ENCODE measurements at regions of chr12 and their contacts with region 1.

Region 1: DNA sequence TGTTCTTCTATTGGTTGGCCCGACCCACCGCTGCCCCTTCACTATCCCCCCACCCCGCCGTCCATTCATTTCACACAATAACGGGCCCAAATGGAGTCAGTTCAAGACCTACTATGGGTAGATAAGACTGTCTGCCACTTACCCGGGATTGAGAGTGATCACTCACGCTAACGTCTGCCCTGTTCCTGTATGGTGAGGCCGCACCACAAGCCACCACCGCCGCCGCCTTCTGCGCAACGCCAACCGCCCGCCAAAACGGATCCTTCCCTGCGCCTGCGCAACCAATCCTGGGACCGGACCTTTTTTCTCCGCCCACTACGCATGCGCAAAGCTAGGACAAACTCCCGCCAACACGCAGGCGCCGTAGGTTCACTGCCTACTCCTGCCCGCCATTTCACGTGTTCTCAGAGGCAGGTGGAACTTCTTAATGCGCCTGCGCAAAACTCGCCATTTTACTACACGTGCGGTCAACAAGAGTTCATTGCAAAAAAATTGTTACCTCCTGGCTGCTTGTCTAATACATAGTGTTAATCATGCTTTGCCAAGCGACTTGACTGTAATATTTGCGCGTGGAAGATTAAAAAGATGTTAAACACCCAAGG is at the start of gene CBX5:
- DNase-seq: peak; percentile 100
- H3K4me3 ChIP-seq: peak within 1 kb of the TSS; percentile 89
- H3K27ac ChIP-seq: peak within 1 kb of the TSS; percentile 85
- H3K4me1 ChIP-seq: peaks cover 58% of the 10 kb centered on the region
- CTCF ChIP-seq: no peak
- total RNA-seq, gene CBX5: 97.8 and 115 TPM in 2 replicates

Region 2: DNA sequence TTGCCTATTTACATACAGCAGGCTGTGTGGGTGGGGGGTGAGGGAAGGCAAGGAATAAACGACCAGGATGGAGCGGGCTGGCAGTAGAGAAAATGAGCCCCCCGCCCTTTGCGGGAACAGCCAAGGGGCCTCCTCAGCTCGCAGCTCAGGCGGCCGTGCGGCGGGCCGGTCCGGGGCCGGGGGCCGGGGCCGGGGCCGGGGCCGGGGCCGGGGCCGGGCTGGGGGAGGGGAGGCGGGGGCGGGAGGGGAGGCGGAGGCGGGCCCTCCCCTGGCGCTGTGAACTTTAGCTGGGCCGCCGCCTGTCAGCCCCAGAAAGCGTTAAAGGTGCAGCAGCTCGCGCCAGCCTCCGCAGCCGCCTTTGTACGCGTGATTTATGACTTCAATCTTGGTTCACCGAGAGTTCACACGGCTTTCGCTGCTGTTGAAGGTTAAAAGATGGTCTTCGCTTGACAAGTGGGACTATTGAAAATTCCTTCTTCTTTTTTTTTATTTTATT is 197.5 kb before region 1 on chr12:
- CTCF ChIA-PET with region 1: no interaction called
- POLR2A ChIA-PET with region 1: no interaction called
- intact Hi-C with region 1: no loop called
- DNase-seq: peak; percentile 39
- H3K4me3 ChIP-seq: peak overlapping the region; percentile 57
- H3K27ac ChIP-seq: peak overlapping the region; percentile 37
- H3K4me1 ChIP-seq: peaks cover 8% of the 10 kb centered on the region
- CTCF ChIP-seq: no peak

Region 3: GRCh38 chr12:54214553-54215406 is 65.2 kb before region 1 on chr12:
- CTCF ChIA-PET with region 1: no interaction called
- POLR2A ChIA-PET with region 1: no interaction called
- intact Hi-C with region 1: loop called (anchors 2 kb)
- DNase-seq: peak; percentile 97
- H3K4me3 ChIP-seq: peak overlapping the region; percentile 55
- H3K27ac ChIP-seq: peak overlapping the region; percentile 89
- H3K4me1 ChIP-seq: peaks cover 63% of the 10 kb centered on the region
- CTCF ChIP-seq: peak; percentile 100

Region 4: DNA sequence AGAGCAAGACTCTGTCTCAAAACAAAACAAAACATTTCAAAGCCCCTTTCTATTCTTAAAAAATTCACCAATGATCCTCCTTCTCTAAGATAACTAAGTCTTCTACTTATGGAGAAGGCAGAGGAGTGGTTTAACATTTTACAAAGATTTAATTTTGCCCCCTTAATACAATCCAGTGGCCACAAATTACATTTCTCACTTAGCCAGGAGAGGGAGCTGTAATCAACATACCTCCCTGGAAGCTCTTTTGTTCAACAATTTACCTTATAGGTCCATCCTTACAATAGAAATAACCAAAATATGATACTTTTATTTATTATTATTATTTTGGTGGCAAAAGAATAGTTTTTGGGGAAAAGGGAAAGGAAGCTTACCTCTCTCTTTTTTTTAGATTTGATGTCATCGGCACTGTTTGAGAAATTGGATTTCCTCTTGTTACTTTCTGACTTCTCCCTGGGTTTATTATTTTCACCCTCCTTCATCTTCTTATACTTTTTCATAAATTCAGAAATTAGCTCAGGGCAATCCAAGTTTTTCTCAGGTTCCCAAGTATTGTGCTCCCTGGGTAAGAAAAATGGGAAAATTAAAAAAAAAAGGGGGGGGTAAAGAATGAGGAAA is 28.2 kb before region 1 on chr12:
- CTCF ChIA-PET with region 1: interaction called, 3 read pairs
- POLR2A ChIA-PET with region 1: interaction called, 6 read pairs
- intact Hi-C with region 1: loop called (anchors 2 kb)
- DNase-seq: peak; percentile 62
- H3K4me3 ChIP-seq: no peak overlapping the region
- H3K27ac ChIP-seq: no peak overlapping the region
- H3K4me1 ChIP-seq: no peaks in the 10 kb centered on the region
- CTCF ChIP-seq: peak; percentile 86

Region 5: DNA sequence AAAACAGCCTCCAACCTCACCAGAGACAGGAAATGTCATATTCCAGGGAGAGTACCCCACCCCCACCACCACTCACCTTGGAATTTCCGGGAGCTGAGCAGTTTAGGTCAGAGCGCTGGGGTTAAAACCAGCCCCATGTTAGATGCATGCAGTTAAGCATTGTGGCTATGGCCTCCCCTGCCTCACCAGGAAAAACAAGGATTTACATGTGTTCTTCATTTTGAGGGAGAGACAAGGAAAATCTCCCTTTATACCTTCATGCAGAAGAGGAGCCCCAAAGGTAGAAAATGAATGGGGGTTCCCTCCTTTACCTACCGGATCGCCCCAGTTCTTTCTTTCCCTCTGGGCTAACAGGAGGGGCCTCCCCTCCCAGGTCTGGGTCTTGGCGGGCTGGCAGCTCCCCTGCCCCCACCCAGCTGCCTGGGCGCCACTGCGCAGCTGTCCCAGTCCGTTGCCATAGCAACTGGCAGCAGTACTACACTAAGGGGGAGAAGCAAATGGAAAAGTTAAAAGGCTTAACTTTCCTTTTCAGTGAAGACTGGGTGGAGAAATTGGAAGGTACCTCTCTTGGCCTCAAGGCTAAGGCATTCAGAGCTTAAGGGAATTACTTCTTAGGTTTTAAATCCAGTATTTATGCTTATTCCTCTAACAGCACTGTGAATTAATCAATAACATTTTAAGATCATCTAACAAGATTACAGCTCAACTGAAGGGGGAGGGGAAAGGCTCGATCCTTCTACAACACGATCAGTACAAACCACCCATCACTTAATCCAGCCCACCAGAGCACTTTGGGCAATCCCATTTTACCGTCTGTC is 20.6 kb before region 1 on chr12:
- CTCF ChIA-PET with region 1: no interaction called
- POLR2A ChIA-PET with region 1: interaction called, 24 read pairs
- intact Hi-C with region 1: loop called (anchors 1 kb)
- DNase-seq: peak; percentile 92
- H3K4me3 ChIP-seq: peak overlapping the region; percentile 65
- H3K27ac ChIP-seq: peak overlapping the region; percentile 73
- H3K4me1 ChIP-seq: peaks cover 53% of the 10 kb centered on the region
- CTCF ChIP-seq: no peak

Region 6: DNA sequence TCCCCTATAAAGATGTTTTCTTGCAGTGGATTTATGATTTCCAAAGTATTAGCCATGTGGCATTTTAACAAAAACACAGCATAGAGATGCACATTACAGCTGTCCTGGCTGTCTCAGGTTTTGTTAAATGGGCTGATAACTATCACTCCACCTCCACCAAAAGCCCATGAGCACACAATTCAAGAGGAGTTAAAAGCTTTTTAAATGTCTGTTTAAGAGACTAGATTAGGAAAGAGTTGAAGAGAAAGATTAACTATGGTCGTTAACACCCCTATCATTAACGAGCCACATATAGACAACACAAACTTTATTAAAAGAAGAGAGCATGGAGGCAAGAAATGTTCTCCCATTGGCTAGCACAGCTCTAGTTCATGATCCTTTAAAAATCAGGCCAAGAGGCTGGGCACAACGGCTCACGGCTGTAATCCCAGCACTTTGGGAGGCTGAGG is 14.6 kb before region 1 on chr12:
- CTCF ChIA-PET with region 1: no interaction called
- POLR2A ChIA-PET with region 1: interaction called, 24 read pairs
- intact Hi-C with region 1: loop called (anchors 2 kb)
- DNase-seq: no peak
- H3K4me3 ChIP-seq: no peak overlapping the region
- H3K27ac ChIP-seq: no peak overlapping the region
- H3K4me1 ChIP-seq: peaks cover 26% of the 10 kb centered on the region
- CTCF ChIP-seq: no peak

Region 7: DNA sequence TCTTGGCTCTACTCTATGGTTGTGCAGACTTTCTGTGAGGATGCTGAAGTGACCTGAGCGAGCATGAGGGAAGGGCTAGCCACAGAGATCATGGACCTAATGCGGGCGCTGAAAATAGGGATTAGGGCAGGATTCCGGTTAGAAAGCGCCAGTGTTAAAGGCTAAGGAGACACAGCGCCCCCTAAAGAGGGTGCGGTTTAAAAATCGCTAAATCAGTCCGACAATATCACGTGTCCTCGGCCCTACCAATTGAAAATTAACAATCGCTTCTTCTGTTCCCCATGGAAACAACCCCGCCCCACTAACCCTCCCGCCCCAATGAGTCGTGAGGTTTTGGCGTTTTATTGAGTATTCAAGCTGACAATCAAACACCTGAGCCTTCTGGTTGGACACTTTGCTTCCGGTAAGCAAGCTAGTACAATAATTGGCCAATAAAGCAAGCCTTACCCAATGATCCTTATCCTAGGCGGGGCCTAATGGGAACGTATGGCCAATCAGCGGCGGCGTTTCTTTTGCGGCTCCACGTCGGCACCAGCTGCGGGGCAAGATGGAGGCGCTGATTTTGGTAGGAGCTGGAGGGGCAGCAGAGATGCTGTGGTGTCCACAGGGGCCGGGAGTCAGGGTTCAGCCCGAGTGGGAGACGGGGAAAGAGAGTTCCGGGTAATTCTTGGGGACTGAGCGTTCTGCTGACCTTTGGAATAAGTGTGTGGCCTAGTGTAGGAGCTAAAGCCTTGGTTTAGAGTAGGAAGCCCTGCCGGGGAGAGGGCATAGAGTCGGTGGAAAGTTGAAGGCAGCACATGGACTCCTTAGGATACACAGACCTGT is 44.9 kb after region 1 on chr12 and contains the start of gene COPZ1:
- CTCF ChIA-PET with region 1: interaction called, 4 read pairs
- POLR2A ChIA-PET with region 1: interaction called, 5 read pairs
- intact Hi-C with region 1: loop called (anchors 1 kb)
- DNase-seq: peak; percentile 99
- H3K4me3 ChIP-seq: peak within 1 kb of the TSS; percentile 72
- H3K27ac ChIP-seq: peak within 1 kb of the TSS; percentile 1
- H3K4me1 ChIP-seq: peaks cover 5% of the 10 kb centered on the region
- CTCF ChIP-seq: peak; percentile 94
- total RNA-seq, gene COPZ1: 77.5 and 86.0 TPM in 2 replicates